ENCODE measurements at regions of chr18 and their contacts with region 1.

Region 1: DNA sequence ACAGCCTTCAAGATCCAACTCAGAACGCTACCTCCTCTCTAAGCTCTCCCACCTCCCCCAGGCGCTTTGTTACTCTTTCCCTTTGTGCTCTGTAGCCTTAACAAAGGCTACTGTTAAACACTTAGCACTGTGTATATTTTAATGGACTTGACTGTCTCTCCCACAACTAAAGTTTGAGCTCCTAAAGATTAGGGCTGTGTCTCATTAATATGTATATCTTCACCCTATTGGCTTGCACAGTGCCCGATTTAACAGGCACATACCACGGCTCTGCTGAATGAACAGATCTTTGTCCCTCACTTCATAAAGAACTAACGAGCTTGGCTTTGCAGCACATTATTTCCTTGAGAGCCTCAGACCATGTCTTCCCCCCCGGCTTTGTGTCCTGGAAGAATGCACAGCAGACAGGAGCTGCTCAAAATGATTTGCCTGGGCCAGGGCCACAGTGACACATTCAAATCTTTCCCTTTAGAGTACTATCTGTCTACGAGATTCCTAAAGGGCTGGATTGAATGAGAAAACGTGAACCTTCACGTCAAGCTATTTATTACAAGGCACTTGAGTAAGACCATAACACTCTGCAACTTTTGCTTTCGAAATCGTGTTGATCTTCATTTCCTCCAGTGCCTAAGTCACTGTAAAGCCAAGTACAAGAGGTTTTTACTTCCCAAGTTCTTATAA is 22.1 kb downstream of the ABHD3 start:
- DNase-seq: peak; percentile 14
- H3K4me3 Mint-ChIP-seq: no peak overlapping the region
- H3K27ac Mint-ChIP-seq: no peak overlapping the region
- H3K4me1 Mint-ChIP-seq: peaks cover 14% of the 10 kb centered on the region
- H3K27me3 Mint-ChIP-seq: no peaks in the 10 kb centered on the region

Region 2: DNA sequence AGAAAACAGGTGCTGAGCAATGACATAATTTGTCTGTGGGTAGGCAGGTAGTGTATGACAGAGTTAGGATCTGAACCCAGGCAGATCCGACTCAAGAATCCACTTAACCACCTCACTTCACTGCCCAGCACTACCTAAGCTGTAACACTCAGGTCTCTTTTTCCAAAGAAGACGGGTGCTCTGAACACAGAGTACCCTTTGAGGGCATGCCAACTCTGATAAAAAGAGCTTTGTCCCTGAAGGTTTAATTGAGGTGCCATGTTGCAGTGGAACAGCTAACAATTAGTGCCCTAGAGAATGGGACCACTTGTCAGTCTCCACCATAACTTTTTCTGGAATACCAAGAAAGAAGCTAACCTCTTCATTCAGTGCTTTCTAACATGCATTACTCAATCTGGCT is 10.8 kb after region 1 on chr18:
- intact Hi-C with region 1: no loop called
- DNase-seq: no peak
- H3K4me3 Mint-ChIP-seq: no peak overlapping the region
- H3K27ac Mint-ChIP-seq: no peak overlapping the region
- H3K4me1 Mint-ChIP-seq: peaks cover 8% of the 10 kb centered on the region
- H3K27me3 Mint-ChIP-seq: no peaks in the 10 kb centered on the region

Region 3: DNA sequence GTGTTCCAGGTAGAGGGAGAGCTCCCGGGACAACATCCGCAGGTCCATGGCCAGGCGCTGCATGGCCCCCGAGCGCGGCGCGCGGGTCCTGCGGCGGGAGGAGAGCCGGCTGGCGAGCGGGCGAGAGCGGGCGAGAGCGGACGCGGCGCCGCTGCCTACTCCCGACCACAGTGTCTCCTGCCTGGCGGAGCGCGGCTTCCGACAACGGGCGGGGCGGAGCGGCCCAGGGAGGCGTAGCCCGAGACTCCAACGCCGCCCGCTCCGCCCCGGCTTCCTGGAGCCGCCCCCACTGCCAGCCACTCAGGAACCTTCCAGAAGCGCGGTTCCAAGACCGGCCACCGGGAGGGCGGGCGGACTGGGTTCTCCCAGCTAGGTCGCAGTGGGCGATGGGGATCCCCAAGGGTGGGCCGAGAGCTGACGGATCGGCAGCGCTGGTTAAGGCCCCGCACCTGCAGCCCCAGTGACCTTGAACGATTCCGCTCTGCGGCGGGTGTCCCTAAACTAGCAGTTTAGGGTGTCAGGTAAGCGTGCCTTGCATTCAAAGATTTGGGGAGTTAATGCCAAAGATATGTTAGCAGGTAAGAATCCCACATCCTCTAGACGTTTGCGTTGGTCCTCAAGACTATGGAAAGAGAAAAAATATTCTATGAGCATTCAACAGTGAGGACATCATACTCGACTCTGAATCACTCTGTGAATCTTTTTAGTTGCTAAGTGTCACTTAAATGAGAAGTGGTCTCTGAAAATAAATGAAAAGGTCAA is 22.3 kb after region 1 on chr18 and contains the start of gene ABHD3:
- intact Hi-C with region 1: loop called (anchors 2 kb)
- DNase-seq: peak; percentile 90
- H3K4me3 Mint-ChIP-seq: peak within 1 kb of the TSS; percentile 96
- H3K27ac Mint-ChIP-seq: peak within 1 kb of the TSS; percentile 89
- H3K4me1 Mint-ChIP-seq: peaks cover 21% of the 10 kb centered on the region
- H3K27me3 Mint-ChIP-seq: no peaks in the 10 kb centered on the region
- total RNA-seq, gene ABHD3: 29.6 and 31.2 TPM in 2 replicates

Region 4: GRCh38 chr18:21968338-21968737 is 285.8 kb after region 1 on chr18:
- intact Hi-C with region 1: no loop called
- DNase-seq: no peak
- H3K4me3 Mint-ChIP-seq: no peak overlapping the region
- H3K27ac Mint-ChIP-seq: no peak overlapping the region
- H3K4me1 Mint-ChIP-seq: no peaks in the 10 kb centered on the region
- H3K27me3 Mint-ChIP-seq: peaks cover 3% of the 10 kb centered on the region